Colonic mucosa (tissue), 4 donors: ENCODE measurements at regions of chr7 and their contacts with region 1.

Region 1: GRCh38 chr7:99040104-99040958 is 103.6 kb downstream of the SMURF1 start:
- DNase-seq: peak; percentile 92
- H3K4me3 ChIP-seq: no peak overlapping the region
- H3K27ac ChIP-seq: peak overlapping the region; percentile 56
- H3K4me1 ChIP-seq: no peaks in the 10 kb centered on the region
- H3K27me3 ChIP-seq: no peaks in the 10 kb centered on the region
- CTCF ChIP-seq: peak; percentile 69

Region 2: GRCh38 chr7:99126921-99127553 is 86.7 kb after region 1 on chr7:
- intact Hi-C with region 1: no loop called
- DNase-seq: no peak
- H3K4me3 ChIP-seq: no peak overlapping the region
- H3K27ac ChIP-seq: no peak overlapping the region
- H3K4me1 ChIP-seq: peaks cover 26% of the 10 kb centered on the region
- H3K27me3 ChIP-seq: no peaks in the 10 kb centered on the region
- CTCF ChIP-seq: no peak

Region 3: GRCh38 chr7:99143853-99144672 is 103.7 kb after region 1 on chr7 and contains the start of gene SMURF1:
- intact Hi-C with region 1: loop called (anchors 10 kb)
- DNase-seq: peak; percentile 67
- H3K4me3 ChIP-seq: peak within 1 kb of the TSS; percentile 96
- H3K27ac ChIP-seq: peak within 1 kb of the TSS; percentile 98
- H3K4me1 ChIP-seq: no peaks in the 10 kb centered on the region
- H3K27me3 ChIP-seq: no peaks in the 10 kb centered on the region
- CTCF ChIP-seq: no peak
- total RNA-seq, gene SMURF1: 26.8 to 35.5 TPM

Region 4: DNA sequence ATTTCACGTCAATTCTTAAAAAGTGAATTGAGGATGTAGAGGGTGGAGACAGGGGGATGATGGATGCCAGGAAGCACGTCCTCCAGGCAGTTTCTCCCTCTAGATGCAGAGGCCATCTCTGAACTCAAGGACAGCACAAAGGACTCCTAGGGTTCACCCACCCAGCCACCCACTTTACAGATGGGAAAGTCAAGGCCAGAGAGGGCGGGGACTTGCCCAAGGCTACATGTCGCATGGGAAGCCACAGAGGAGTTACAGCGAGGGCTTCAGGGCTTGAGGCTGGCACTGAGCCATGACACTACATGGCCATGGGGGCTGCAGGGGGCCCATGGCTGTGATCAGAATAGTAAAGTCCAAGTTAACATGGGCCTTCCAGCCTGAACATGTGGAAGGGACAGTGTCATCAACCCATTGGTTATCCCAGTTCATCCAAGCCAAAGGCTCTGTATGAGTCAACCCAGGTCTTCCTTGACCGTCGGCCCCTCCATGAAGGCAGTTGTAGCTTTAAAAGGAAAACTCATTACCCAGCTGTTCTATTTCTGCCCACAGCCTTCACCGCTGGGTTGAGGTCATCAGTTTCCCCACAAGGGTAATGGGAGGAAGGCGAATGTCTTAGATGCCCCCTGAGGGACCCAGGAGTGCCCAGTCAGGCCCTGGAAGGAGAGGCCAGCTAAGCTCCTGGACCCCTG is 191.9 kb after region 1 on chr7:
- intact Hi-C with region 1: loop called (anchors 5 kb)
- DNase-seq: no peak
- H3K4me3 ChIP-seq: no peak overlapping the region
- H3K27ac ChIP-seq: no peak overlapping the region
- H3K4me1 ChIP-seq: no peaks in the 10 kb centered on the region
- H3K27me3 ChIP-seq: no peaks in the 10 kb centered on the region
- CTCF ChIP-seq: no peak

Region 5: DNA sequence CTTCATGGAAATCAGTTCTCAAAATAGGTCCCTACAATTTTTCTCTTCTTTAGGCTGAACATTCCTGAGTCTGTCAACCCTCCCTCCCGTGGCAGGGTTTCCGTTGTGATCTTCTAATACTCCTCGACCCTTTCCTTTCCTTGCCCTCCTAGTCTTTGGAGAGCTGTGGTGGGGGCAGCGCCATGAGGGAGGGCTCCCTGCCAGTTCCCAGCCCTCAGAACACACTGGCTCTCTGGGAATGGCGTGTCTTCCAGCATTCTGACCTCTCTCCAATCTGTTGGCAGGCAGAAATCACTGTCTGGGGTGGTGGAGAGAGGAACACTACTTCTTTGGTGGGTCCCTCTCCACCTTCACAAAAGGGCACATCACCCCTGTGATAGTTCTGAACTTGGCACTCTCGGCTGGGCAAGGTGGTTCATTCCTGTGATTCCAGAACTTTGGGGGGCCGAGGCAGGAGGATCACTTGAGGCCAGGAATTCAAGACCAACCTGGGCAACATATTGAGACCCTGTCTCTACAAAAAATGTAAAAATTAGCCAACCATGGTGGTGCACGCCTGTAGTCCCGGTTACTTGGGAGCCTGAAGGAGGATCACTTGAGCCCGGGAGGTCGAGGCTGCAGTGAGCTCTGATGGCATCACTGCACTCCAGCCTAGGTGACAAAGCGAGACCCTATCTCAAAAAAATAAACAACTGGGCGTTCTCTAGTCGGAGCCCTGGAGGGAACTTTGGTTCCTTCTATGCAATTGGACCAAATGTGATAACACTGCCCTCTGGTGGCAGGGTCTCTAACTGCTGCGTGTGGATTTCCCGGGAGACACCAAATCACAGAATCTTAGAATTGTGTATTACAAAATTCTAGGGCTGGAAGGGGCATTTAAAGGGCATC is 272.2 kb after region 1 on chr7:
- intact Hi-C with region 1: loop called (anchors 1 kb)
- DNase-seq: peak; percentile 87
- H3K4me3 ChIP-seq: no peak overlapping the region
- H3K27ac ChIP-seq: no peak overlapping the region
- H3K4me1 ChIP-seq: no peaks in the 10 kb centered on the region
- H3K27me3 ChIP-seq: no peaks in the 10 kb centered on the region
- CTCF ChIP-seq: peak; percentile 90